ENCODE measurements at regions of chr5 and their contacts with region 1.

Region 1: DNA sequence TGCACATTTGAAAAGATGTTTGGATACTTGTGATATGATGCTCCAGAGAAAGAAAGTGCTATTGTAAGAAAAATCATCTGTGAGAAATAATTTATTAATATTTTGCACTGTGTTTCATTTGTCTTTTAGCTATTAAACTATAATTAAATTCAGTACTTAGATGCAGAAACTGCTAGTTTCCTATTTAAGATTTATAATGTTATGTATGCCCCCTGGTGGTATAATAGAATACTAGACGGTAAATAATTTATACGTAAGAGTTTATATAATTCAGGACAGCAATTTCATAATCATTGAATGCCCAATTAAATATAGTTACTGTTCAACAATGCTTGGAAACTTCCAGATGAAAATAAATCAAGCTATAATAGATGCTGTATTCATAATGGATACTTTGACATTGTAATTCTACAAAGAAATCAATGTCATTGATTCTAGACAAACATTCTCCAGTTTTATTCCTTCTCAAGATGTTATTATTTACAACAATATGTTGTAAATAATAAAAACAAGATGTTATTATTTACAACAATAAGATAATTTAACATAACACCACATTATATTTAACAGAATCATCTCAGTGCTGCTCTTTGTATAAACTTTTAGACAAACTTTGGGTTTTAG is 101.0 kb downstream of the TMEM232 start:
- DNase-seq: no peak
- ATAC-seq: no peak
- H3K4me3 ChIP-seq: no peak overlapping the region
- H3K27ac ChIP-seq: no peak overlapping the region
- H3K4me1 ChIP-seq: no peaks in the 10 kb centered on the region
- H3K27me3 ChIP-seq: no peaks in the 10 kb centered on the region
- CTCF ChIP-seq: peak in 1 of 3 experiments; percentile 24; a peak in 2 of 6 replicates
- EP300 ChIP-seq: no peak
- POLR2A ChIP-seq: no peak
- RAD21 ChIP-seq: 0 out of 2 replicates have a peak, but pooled peaks have one; percentile 17

Region 2: GRCh38 chr5:110441035-110441434 is 184.5 kb before region 1 on chr5:
- CTCF ChIA-PET with region 1: interaction called, 5 read pairs
- POLR2A ChIA-PET with region 1: no interaction called
- RAD21 ChIA-PET with region 1: no interaction called
- SMC1A ChIA-PET with region 1: interaction called, 4 read pairs
- in situ Hi-C with region 1: no loop called
- intact Hi-C with region 1: loop called (anchors 5 kb)
- DNase-seq: no peak
- ATAC-seq: peak; percentile 85
- H3K4me3 ChIP-seq: no peak overlapping the region
- H3K27ac ChIP-seq: no peak overlapping the region
- H3K4me1 ChIP-seq: no peaks in the 10 kb centered on the region
- H3K27me3 ChIP-seq: no peaks in the 10 kb centered on the region
- CTCF ChIP-seq: peak; percentile 48 to 56 (median 53); a peak in 5 of 6 replicates
- EP300 ChIP-seq: no peak
- POLR2A ChIP-seq: no peak
- RAD21 ChIP-seq: peak; percentile 70

Region 3: DNA sequence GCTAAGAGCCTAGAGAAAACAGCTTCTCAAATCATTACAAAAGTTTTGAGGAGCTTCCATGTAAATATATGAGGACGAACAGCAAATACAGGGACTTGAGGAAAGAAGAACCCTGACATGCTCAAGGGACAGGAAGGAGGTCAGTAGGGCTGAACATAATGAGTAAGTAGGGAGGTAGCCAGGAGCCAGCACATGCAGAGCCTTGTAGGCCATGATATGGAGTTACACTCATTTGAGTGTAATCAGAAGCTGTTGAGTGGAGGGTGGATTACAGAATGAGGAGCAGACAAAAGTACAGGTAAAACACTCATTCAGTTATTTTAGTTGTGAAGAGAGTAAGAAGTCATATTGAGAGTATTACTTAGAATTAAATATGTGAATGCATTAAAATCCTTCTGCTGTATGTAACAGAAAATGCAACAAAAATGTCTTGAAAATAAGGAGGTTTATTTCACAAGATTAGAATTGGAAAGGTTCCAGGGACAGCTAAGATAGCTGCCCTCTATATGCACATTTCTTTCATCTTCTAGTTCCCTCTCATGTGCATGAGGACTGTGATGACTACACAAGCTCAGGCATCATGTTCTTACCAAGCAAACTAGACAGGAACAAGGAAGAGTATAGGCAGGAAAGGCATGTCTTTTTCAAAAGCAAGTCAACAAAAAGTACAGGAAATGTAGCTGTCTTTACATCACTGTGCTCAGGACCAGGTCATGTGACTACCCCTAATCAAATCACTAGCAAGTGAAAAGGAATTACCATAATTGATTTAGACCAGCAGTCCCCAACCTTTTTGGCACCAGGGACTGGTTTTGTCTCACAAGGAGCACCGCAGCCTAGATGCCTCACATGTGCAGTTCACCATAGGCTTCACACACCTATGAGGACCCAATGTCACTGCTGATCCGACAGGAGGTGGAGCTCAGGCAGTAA is 13.7 kb after region 1 on chr5:
- CTCF ChIA-PET with region 1: interaction called, 12 read pairs
- POLR2A ChIA-PET with region 1: no interaction called
- RAD21 ChIA-PET with region 1: no interaction called
- SMC1A ChIA-PET with region 1: interaction called, 7 read pairs
- in situ Hi-C with region 1: no loop called
- intact Hi-C with region 1: no loop called
- DNase-seq: no peak
- ATAC-seq: no peak
- H3K4me3 ChIP-seq: no peak overlapping the region
- H3K27ac ChIP-seq: no peak overlapping the region
- H3K4me1 ChIP-seq: no peaks in the 10 kb centered on the region
- H3K27me3 ChIP-seq: no peaks in the 10 kb centered on the region
- CTCF ChIP-seq: no peak
- EP300 ChIP-seq: no peak
- POLR2A ChIP-seq: no peak
- RAD21 ChIP-seq: no peak

Region 4: DNA sequence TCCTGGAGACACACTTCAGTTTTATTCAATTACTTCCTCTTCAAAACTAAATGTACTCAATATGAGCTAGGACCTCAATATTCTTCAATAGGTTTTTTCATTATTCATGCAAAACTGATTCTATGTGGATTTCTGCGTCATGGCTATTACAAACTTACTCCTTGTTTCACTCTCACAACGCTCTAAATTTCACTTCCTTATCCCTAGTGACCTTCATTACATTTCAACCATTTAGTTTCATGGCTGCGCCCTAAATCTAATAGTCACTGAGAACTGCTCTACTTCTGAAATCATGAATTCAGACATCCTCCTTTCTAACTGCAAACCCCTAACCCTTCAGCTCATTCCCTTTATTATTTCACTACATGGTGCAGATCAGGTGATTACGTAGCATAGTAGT is 207.2 kb after region 1 on chr5:
- CTCF ChIA-PET with region 1: no interaction called
- POLR2A ChIA-PET with region 1: no interaction called
- RAD21 ChIA-PET with region 1: no interaction called
- SMC1A ChIA-PET with region 1: no interaction called
- in situ Hi-C with region 1: no loop called
- intact Hi-C with region 1: no loop called
- DNase-seq: no peak
- ATAC-seq: peak; percentile 93
- H3K4me3 ChIP-seq: no peak overlapping the region
- H3K27ac ChIP-seq: no peak overlapping the region
- H3K4me1 ChIP-seq: no peaks in the 10 kb centered on the region
- H3K27me3 ChIP-seq: no peaks in the 10 kb centered on the region
- CTCF ChIP-seq: no peak
- EP300 ChIP-seq: no peak
- POLR2A ChIP-seq: no peak
- RAD21 ChIP-seq: no peak

Measured in GM12878 (cell line).